Left cardiac atrium (tissue), 4 donors: ENCODE measurements at regions of chr22 and their contacts with region 1.

Region 1: GRCh38 chr22:29167032-29167911 is 38.4 kb upstream of the EMID1 start:
- DNase-seq: no peak
- ATAC-seq: no peak

Region 2: DNA sequence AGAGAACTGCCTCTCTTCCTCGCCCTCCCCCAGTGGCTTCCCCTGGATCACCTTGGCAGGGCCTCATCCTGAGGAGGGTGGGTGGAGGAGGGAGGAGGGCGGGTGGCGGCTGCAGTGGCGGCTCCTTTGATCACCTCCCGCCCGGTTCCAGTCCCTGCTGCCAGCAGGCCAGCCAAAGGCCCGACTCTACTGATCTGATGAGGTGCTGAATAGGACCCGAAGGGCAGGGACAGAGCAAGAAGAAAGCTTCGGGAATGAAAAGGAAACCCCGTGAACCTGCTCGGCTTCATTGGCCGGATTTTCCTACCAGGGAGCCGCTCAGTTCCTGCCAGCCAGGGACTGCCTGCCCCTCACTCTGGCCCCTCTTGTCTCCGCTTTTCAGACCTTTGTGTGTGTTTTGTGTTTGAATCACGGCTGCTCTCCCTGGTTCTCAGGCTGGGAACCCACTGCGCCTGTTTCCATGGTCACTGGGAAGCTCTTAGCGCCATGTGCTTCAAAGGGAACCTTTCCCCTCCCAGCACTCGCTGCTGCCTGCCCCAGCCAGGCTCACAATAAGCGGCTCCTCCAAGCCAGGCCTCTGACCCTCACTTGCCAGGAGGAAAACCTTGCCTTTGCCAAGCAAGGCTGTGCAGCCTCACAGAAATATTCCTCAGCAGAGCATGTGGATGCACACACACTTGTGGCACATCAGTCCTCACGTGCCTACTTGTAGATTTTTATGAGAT is 162.5 kb before region 1 on chr22:
- intact Hi-C with region 1: no loop called
- DNase-seq: peak; percentile 30
- ATAC-seq: peak; percentile 67 to 75

Region 3: GRCh38 chr22:29202212-29203192 is 35.2 kb after region 1 on chr22:
- intact Hi-C with region 1: no loop called
- DNase-seq: peak; percentile 63
- ATAC-seq: peak; percentile 60 to 62

Region 4: DNA sequence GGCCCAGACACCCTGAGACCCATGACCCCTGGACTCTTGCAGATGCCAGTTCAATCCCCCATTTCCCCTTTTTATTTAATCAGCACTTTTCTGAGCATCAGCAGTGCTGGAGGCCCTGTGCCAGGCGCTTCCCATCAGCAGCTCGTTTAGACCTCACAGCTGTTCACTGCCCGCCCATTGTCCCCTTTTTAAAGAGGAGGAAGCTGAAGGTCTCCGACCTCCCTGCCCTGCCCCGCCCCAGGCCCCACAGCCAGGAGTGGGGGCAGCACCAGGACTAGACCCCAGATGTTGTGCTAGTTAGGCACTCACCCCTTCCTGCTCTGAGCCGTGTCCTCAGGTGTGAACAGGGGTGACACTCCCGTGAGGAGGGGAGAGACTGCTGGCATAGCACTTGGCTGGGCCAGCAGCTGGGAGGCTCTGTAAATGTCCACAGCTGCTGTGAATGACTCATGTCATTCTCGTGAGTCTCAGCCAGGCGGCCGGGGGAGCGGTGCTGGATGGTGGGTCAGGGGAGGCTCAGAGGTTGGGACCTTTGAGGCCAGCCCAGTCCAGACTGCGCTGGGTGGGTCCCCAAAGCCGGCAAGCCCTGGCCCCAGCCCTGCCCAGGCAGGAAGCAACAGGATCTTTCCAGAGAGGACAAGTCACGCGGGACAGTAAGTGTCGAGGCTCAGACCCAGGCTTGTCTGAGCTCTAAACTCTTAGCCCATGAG is 58.3 kb after region 1 on chr22:
- intact Hi-C with region 1: loop called in 1 of 2 experiments (anchors 10 kb)
- DNase-seq: peak; percentile 69
- ATAC-seq: peak; percentile 69 to 83